ENCODE measurements at regions of chr7 and their contacts with region 1.

Region 1: DNA sequence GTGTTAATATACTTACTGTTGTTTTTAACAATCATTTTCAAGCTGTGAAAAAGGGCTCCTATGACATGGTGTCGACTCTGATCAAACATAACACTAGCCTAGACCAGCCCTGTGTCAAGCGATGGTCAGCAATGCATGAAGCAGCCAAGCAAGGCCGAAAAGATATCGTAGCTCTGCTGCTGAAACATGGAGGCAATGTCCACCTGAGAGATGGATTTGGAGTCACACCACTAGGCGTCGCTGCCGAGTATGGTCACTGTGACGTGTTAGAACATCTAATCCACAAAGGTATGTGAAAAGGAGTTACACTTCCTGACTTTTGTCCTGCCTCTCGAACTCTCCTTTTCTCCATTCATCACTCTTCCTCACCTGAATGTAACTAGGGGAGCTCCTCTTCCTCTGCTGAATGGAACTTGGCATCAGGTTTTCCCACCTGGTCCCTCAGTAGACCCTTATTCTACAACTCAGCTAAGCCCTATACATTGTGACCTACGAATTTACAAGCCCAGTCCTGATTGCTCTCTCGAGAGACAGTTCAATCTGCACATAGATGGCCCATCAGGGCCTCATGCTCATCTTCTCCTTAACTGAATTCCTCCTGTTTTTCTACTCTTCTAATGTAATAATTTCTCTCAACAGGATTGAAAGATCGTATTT is 23.0 kb downstream of the ASB15 start:
- DNase-seq: peak; percentile 86
- ATAC-seq: peak; percentile 87
- H3K4me3 Mint-ChIP-seq: no peak overlapping the region
- H3K27ac Mint-ChIP-seq: no peak overlapping the region
- H3K4me1 Mint-ChIP-seq: peaks cover 10% of the 10 kb centered on the region
- H3K27me3 Mint-ChIP-seq: peaks cover 3% of the 10 kb centered on the region; the same call in 1 of the 2 replicates
- CTCF ChIP-seq: peak; percentile 70

Region 2: DNA sequence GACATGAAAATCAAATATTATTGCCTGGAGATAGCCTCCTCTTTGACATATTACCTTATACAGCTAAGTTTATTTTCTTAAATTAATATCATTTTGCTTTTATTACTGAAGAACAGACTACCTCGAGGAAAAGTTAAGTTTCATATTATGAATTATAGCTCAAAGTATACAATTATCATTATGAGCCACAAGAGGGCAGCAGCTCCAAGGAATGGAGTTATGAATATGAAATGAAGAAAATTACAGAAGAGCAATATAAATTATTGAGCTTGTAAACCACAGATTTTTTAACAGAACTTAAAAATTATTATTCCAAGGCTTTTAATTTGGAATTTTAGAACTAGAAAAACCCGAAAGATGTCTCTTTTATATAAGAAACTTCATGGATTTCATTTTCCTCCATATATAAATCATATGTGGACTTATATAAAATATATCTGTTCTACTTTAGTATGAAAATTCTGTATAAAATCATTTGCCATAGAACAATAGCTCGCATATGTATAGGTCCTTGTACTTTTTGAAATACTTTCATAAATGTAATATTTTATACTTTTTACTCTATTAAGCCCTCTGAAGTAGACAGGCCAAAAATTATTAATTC is 130.4 kb before region 1 on chr7:
- CTCF ChIA-PET with region 1: interaction called, 11 read pairs
- POLR2A ChIA-PET with region 1: interaction called, 3 read pairs
- DNase-seq: no peak
- ATAC-seq: no peak
- H3K4me3 Mint-ChIP-seq: no peak overlapping the region
- H3K27ac Mint-ChIP-seq: no peak overlapping the region
- H3K4me1 Mint-ChIP-seq: peaks cover 7% of the 10 kb centered on the region
- H3K27me3 Mint-ChIP-seq: no peaks in the 10 kb centered on the region
- CTCF ChIP-seq: peak; percentile 58

Region 3: DNA sequence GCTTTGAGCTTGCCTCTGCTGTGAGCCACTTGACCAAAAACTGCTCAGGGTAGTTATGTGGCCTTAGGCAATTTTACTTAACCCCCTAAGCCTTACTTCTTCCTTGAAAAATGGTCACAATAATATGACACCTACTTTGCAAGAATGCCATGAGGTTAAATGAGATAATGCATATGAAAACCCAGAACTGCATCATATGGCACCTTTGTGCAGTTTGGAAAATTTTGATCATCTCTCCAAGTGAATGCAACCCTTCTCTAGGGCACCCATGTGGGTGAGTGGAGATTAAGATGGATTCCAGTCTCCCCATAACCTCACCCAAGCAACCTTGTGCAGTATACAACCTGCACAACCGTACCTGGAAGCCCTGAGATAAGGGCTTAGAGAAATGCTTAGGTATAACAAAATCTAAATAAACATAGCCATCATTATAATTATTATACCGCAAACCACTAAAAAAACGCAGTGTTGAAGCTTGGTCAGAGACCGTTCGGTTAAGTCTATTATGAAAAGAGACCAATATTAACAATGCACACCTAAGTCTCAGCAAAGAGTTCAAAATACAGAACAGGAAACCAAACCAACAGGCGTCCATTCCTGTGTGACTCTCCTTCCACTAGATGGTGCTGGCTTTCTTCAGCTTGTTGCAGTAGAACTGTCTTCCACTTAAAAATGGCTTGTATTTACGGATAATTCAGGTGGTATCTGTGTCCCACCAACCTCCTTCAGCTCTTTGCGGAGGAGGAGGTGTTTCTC is 44.1 kb before region 1 on chr7:
- CTCF ChIA-PET with region 1: interaction called, 20 read pairs
- POLR2A ChIA-PET with region 1: no interaction called
- DNase-seq: no peak
- ATAC-seq: peak; percentile 95
- H3K4me3 Mint-ChIP-seq: no peak overlapping the region
- H3K27ac Mint-ChIP-seq: no peak overlapping the region; the same call in 1 of the 2 replicates
- H3K4me1 Mint-ChIP-seq: peaks cover 38% of the 10 kb centered on the region
- H3K27me3 Mint-ChIP-seq: no peaks in the 10 kb centered on the region
- CTCF ChIP-seq: no peak

Region 4: DNA sequence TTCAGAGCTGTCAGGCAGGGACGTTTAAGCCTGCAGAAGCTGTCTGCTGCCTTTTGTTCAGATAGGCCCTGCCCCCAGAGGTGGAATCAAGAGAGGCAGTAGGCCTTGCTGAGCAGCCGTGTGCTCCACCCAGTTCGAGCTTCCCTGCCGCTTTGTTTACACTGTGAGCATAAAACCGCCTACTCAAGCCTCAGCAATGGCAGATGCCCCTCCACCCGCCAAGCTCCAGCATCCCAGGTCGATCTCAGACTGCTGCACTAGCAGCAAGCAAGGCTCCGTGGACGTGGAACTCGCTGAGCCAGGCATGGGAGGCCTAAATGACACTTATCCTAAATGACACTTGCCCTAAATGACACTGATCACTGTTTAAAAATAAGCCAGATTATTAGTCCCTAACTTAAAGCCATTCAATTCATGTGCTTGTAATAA is 29.8 kb before region 1 on chr7:
- CTCF ChIA-PET with region 1: interaction called, 11 read pairs
- POLR2A ChIA-PET with region 1: no interaction called
- DNase-seq: peak; percentile 67
- ATAC-seq: peak; percentile 92
- H3K4me3 Mint-ChIP-seq: peak overlapping the region; percentile 32
- H3K27ac Mint-ChIP-seq: 0 out of 2 replicates have a peak overlapping the region, but pooled peaks have one; percentile 66
- H3K4me1 Mint-ChIP-seq: peaks cover 15% of the 10 kb centered on the region
- H3K27me3 Mint-ChIP-seq: no peaks in the 10 kb centered on the region; the same call in none of the 2 replicates
- CTCF ChIP-seq: no peak

Region 5: GRCh38 chr7:123608991-123609882 is 15.4 kb before region 1 on chr7:
- CTCF ChIA-PET with region 1: interaction called, 11 read pairs
- POLR2A ChIA-PET with region 1: no interaction called
- DNase-seq: no peak
- ATAC-seq: no peak
- H3K4me3 Mint-ChIP-seq: no peak overlapping the region
- H3K27ac Mint-ChIP-seq: no peak overlapping the region
- H3K4me1 Mint-ChIP-seq: no peaks in the 10 kb centered on the region
- H3K27me3 Mint-ChIP-seq: no peaks in the 10 kb centered on the region
- CTCF ChIP-seq: no peak

Region 6: DNA sequence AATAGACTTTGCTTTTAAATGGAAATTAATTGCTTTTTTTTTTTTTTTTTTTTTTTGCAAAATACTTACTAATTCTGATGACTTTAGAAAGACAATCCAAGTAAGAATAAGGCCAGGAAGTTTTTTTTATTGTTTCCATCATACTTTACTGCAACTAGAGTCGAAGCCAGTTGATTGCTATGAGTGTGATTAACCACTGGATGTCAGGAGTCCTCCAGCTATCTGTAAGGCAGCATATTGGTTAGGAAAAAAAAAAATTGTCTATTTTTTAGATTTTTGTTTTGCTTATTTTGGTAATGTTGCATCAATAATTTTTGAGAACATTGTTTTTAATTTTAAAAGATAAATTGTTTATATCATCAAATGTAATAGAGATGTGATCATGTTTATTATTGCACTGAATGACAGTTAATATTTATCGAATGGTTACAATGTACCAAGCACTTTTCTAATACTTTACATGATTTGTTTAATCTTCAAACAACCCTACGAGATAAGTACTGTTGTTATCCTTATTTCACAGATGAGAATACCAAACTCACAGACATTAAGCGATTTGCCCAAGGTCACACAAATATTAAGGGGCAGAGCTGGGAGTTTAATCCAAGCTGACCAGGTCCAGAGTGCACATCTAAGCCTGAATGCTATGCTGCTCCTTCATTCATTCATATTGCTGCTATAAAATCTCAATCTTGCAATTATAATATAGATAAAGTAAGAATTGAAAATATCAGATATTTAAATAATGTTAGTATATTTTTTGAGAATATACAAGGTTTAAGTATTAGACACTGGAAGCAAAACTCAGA is 11.1 kb after region 1 on chr7:
- CTCF ChIA-PET with region 1: interaction called, 32 read pairs
- POLR2A ChIA-PET with region 1: no interaction called
- DNase-seq: no peak
- ATAC-seq: peak; percentile 76
- H3K4me3 Mint-ChIP-seq: no peak overlapping the region
- H3K27ac Mint-ChIP-seq: no peak overlapping the region
- H3K4me1 Mint-ChIP-seq: peaks cover 10% of the 10 kb centered on the region
- H3K27me3 Mint-ChIP-seq: no peaks in the 10 kb centered on the region
- CTCF ChIP-seq: no peak

Region 7: DNA sequence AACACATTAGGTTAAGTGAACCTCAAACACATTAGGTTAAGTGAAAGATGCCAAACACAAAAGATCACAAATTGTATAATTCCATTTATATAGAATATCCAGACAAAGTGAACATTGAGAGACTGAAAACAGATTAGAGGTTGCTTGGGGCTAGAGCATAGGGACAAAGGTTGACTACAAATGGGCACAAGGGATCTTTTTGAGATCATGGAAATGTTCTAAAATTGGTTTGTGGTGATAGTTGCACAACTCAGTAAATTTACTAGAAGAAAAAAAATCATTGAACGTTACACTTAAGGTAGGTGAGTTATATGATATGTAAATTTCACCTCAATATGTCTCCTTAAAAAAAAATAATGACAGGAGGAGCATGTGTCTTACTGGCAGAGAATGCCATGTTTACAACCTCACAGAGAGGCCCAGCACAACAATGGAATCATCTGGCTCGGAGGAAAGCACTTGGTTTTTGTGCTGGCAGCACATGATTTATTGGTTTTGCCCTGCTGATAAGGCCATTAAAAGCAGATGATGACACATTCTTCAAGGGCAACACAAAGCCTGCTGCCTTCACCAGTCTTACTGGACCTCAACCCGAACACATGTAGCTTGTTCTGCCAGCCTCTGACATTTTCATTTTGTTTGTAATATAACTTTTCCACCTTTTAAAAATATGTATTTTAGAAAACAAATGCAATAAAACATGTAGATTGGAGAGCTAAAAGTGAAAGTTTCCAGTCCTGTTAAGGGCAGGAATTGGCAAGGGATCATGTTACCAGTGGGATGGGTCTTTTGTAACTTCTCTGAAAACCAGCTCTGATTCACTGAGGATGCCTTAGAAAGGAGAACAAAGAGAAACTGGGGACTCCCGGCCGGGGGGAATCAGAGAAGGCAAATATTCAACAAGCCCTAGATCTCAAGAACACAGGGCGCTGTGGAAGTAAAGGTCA is 19.1 kb after region 1 on chr7:
- CTCF ChIA-PET with region 1: interaction called, 15 read pairs
- POLR2A ChIA-PET with region 1: no interaction called
- DNase-seq: peak; percentile 38
- ATAC-seq: peak; percentile 96
- H3K4me3 Mint-ChIP-seq: peak overlapping the region; percentile 46
- H3K27ac Mint-ChIP-seq: peak overlapping the region; percentile 65
- H3K4me1 Mint-ChIP-seq: peaks cover 49% of the 10 kb centered on the region
- H3K27me3 Mint-ChIP-seq: no peaks in the 10 kb centered on the region
- CTCF ChIP-seq: no peak

Region 8: GRCh38 chr7:123751821-123752220 is 127.2 kb after region 1 on chr7:
- CTCF ChIA-PET with region 1: no interaction called
- POLR2A ChIA-PET with region 1: no interaction called
- DNase-seq: no peak
- ATAC-seq: no peak
- H3K4me3 Mint-ChIP-seq: peak overlapping the region; percentile 45
- H3K27ac Mint-ChIP-seq: peak overlapping the region; percentile 57
- H3K4me1 Mint-ChIP-seq: peaks cover 48% of the 10 kb centered on the region
- H3K27me3 Mint-ChIP-seq: no peaks in the 10 kb centered on the region
- CTCF ChIP-seq: no peak

Region 9: DNA sequence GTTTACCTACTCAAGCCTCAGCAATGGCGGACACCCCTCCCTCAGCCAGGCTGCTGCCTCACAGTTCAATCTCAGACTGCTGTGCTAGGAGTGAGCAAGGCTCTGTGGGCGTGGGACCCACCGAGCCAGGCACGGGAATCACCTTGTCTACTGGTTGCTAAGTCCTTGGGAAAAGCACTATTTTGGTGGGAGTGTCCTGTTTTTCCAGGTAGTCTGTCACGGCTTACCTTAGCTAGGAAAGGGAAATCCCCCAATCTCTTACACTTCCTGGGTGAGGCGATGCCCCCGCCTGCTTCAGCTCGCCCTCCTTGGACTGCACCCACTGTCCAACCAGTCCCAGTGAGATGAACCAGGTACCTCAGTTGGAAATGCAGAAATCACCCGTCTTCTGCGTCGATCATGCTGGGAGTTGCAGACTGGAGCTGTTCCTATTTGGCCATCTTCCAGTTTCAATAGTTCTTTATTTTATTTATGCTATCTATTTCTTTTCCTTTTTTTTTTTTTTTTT is 220.1 kb after region 1 on chr7 and contains the start of gene HYAL4:
- CTCF ChIA-PET with region 1: no interaction called
- POLR2A ChIA-PET with region 1: no interaction called
- DNase-seq: no peak
- ATAC-seq: no peak
- H3K4me3 Mint-ChIP-seq: no peak within 1 kb of the TSS
- H3K27ac Mint-ChIP-seq: no peak within 1 kb of the TSS
- H3K4me1 Mint-ChIP-seq: no peaks in the 10 kb centered on the region
- H3K27me3 Mint-ChIP-seq: no peaks in the 10 kb centered on the region; the same call in none of the 2 replicates
- CTCF ChIP-seq: no peak
- total RNA-seq, gene HYAL4: not detected in 3 replicates

Measured in WTC11 (cell line).